Activated naive CD4-positive, alpha-beta T cell treated with anti-CD3 and anti-CD28 coated beads for 36 hours (primary cell): ENCODE measurements at regions of chr6 and their contacts with region 1.

Region 1: GRCh38 chr6:89145787-89146646 is at the start of gene PM20D2:
- DNase-seq: peak; percentile 59
- H3K4me3 Mint-ChIP-seq: peak within 1 kb of the TSS; percentile 90
- H3K27ac Mint-ChIP-seq: peak within 1 kb of the TSS; percentile 96
- H3K4me1 Mint-ChIP-seq: peaks cover 27% of the 10 kb centered on the region
- H3K27me3 Mint-ChIP-seq: no peaks in the 10 kb centered on the region
- total RNA-seq, gene PM20D2: 11.6 to 12.7 TPM

Region 2: GRCh38 chr6:88963139-88964090 is 182.6 kb before region 1 on chr6 and contains the start of gene RNGTT:
- CTCF ChIA-PET with region 1: no interaction called
- intact Hi-C with region 1: loop called (anchors 1 kb)
- DNase-seq: peak; percentile 99
- H3K4me3 Mint-ChIP-seq: peak within 1 kb of the TSS; percentile 99
- H3K27ac Mint-ChIP-seq: peak within 1 kb of the TSS; percentile 87
- H3K4me1 Mint-ChIP-seq: peaks cover 34% of the 10 kb centered on the region
- H3K27me3 Mint-ChIP-seq: no peaks in the 10 kb centered on the region
- total RNA-seq, gene RNGTT: 21.7 to 23.5 TPM

Region 3: GRCh38 chr6:89098461-89098860 is 47.6 kb before region 1 on chr6:
- CTCF ChIA-PET with region 1: no interaction called
- intact Hi-C with region 1: loop called (anchors 1 kb)
- DNase-seq: no peak
- H3K4me3 Mint-ChIP-seq: no peak overlapping the region
- H3K27ac Mint-ChIP-seq: no peak overlapping the region
- H3K4me1 Mint-ChIP-seq: peaks cover 4% of the 10 kb centered on the region
- H3K27me3 Mint-ChIP-seq: no peaks in the 10 kb centered on the region

Region 4: GRCh38 chr6:89117211-89118108 is 28.6 kb before region 1 on chr6 and contains the start of gene SRSF12:
- CTCF ChIA-PET with region 1: interaction called, 4 read pairs
- intact Hi-C with region 1: loop called (anchors 2 kb)
- DNase-seq: peak; percentile 37
- H3K4me3 Mint-ChIP-seq: peak within 1 kb of the TSS; percentile 78
- H3K27ac Mint-ChIP-seq: no peak within 1 kb of the TSS
- H3K4me1 Mint-ChIP-seq: peaks cover 5% of the 10 kb centered on the region
- H3K27me3 Mint-ChIP-seq: peaks cover 5% of the 10 kb centered on the region
- total RNA-seq, gene SRSF12: 0.15 TPM in 1 of 2 experiments, not detected in the other

Region 5: DNA sequence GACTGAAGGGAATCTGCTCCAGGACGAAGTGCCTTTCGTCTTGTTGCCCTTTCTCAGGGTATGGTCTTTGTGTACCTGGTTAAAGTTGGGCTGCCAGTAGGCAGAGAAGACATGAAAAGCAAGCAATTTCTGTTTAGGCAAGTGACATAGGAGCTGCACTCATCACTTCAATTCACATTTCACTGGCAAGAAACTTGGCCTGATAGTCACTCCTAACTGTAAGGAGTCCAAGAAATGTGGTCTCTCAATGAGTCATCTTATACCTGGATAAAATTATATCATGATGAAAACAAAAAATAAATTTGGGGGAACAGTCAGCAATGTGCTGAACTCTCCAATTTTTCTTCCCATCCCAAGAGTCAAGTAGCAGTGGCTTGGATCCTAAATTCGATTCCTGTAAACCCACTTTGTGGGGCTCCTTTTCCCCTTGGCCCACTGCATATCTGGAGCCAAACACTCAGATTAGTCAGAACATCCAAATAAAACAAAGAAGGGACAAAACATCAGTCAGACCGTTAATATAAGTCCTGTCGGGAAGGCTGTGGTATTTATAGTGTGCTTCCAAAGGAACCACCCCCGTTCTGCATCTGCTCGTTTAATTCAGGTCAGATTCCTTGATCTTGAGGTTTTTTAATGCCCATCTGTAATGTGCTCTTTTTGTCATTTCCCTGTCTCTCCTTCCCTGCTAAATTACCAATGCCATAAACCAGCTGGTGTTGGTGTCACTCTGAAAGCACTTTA is 76.1 kb after region 1 on chr6:
- CTCF ChIA-PET with region 1: no interaction called
- intact Hi-C with region 1: no loop called
- DNase-seq: no peak
- H3K4me3 Mint-ChIP-seq: no peak overlapping the region
- H3K27ac Mint-ChIP-seq: no peak overlapping the region
- H3K4me1 Mint-ChIP-seq: no peaks in the 10 kb centered on the region
- H3K27me3 Mint-ChIP-seq: peaks cover 3% of the 10 kb centered on the region